Sigmoid colon (tissue), 7 donors: ENCODE measurements at regions of chr4 and their contacts with region 1.

Region 1: DNA sequence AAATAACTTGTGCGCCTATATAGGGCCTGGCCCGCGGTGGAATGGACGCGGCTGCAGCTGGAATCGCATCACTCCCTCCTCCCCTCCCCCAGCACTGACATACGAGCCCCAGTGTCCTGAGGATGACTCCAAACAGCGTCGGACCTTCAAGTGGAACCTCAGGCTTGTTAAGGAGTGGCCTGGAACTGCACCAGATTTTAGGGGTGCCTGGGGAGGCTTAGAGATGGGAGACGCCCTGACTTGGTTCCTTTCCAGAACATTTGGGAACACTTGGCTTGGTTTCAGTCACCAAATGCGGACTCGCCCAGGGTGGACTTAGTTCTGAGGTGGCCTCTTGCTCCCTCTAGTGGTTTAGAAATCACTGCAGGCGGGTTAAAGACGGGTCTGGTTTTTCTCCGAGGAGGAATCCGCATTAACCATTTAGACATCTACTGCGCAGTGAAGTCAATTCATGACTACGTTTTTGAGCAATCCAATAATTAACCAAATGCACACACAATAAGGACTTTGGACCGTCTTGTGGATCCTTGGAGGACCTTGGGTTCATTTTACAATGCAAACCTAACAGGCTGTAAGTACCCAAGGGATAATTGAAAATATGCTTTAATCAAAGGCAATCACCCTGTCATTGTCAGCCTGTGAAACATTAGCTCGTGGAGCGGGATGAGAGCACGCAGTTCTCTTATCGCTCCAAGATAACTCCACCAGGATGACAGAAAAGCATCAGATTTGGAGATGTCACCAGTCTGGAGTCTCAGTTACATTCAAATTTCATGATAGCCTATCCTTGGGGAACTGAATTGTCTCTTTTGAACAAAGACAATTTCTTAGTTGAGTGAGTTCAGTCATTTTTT is 11.2 kb upstream of the PDGFRA start:
- DNase-seq: peak; percentile 94
- H3K4me3 ChIP-seq: peak overlapping the region; percentile 20 to 47 (median 40)
- H3K27ac ChIP-seq: peak overlapping the region in 2 of 4 donors; percentile 24 to 52
- H3K4me1 ChIP-seq: peaks cover 0 to 19% (median 9%) of the 10 kb centered on the region in 4 donors
- H3K27me3 ChIP-seq: peaks cover 0 to 17% (median 0%) of the 10 kb centered on the region in 3 donors
- CTCF ChIP-seq: peak; percentile 93 to 96 (median 93)
- EP300 ChIP-seq: no peak
- POLR2A ChIP-seq: no peak

Region 2: DNA sequence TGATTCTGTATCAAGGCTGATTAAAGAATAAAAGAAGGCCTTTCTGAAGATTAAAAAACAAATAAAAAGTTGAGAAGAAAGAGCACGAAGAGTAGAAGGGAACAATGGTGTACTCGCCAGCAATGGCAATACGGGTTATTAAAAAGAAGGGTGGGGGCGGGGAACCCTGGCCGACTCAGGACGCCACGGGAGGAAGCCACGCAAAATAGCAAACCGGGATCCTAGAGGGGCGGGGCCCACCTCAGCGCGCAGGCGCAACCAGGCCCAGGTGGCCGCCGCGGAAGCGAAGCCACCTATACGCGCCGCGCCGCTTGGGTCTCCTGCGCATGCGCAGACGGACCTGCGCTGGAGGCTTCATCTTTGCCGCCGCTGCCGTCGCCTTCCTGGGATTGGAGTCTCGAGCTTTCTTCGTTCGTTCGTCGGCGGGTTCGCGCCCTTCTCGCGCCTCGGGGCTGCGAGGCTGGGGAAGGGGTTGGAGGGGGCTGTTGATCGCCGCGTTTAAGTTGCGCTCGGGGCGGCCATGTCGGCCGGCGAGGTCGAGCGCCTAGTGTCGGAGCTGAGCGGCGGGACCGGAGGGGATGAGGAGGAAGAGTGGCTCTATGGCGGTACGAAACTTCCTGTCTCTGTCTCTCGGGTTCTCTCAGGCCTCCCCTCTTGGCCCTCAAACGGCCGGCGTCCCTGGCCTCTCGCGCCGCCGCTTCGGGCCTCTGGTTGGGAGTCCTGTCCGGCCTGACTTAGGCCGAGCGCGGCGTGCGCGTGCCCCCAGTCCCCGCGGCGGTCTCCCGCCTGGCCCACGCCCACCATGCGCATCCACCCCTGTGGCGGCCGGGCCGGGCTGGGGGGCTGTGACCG is 840.3 kb before region 1 on chr4 and contains the start of gene FIP1L1:
- intact Hi-C with region 1: loop called (anchors 5 kb)
- DNase-seq: peak; percentile 97
- H3K4me3 ChIP-seq: peak within 1 kb of the TSS; percentile 81 to 94 (median 88)
- H3K27ac ChIP-seq: peak within 1 kb of the TSS; percentile 84 to 90 (median 88)
- H3K4me1 ChIP-seq: peaks cover 0 to 26% (median 16%) of the 10 kb centered on the region in 4 donors
- H3K27me3 ChIP-seq: no peaks in the 10 kb centered on the region
- CTCF ChIP-seq: no peak
- EP300 ChIP-seq: no peak
- POLR2A ChIP-seq: peak; percentile 68 to 79
- total RNA-seq, gene FIP1L1: 33.7 to 47.7 (median 43.7) TPM

Region 3: GRCh38 chr4:53929955-53930798 is 287.7 kb before region 1 on chr4:
- intact Hi-C with region 1: loop called (anchors 1 kb)
- DNase-seq: peak; percentile 82
- H3K4me3 ChIP-seq: no peak overlapping the region
- H3K27ac ChIP-seq: no peak overlapping the region
- H3K4me1 ChIP-seq: peaks cover 0 to 6% (median 0%) of the 10 kb centered on the region in 4 donors
- H3K27me3 ChIP-seq: peaks cover 0 to 3% (median 0%) of the 10 kb centered on the region in 3 donors
- CTCF ChIP-seq: peak; percentile 40 to 78 (median 64)
- EP300 ChIP-seq: no peak
- POLR2A ChIP-seq: no peak

Region 4: GRCh38 chr4:54099748-54100574 is 117.9 kb before region 1 on chr4 and contains the start of gene GSX2:
- intact Hi-C with region 1: loop called (anchors 5 kb)
- DNase-seq: no peak
- H3K4me3 ChIP-seq: peak within 1 kb of the TSS in 3 of 4 donors; percentile 28 to 40 (median 35)
- H3K27ac ChIP-seq: no peak within 1 kb of the TSS
- H3K4me1 ChIP-seq: peaks cover 0 to 43% (median 38%) of the 10 kb centered on the region in 4 donors
- H3K27me3 ChIP-seq: peaks cover 40 to 100% (median 88%) of the 10 kb centered on the region in 3 donors
- CTCF ChIP-seq: no peak
- EP300 ChIP-seq: no peak
- POLR2A ChIP-seq: no peak
- total RNA-seq, gene GSX2: not detected